CD14-positive monocyte (primary cell): ENCODE measurements at regions of chr9 and their contacts with region 1.

Region 1: DNA sequence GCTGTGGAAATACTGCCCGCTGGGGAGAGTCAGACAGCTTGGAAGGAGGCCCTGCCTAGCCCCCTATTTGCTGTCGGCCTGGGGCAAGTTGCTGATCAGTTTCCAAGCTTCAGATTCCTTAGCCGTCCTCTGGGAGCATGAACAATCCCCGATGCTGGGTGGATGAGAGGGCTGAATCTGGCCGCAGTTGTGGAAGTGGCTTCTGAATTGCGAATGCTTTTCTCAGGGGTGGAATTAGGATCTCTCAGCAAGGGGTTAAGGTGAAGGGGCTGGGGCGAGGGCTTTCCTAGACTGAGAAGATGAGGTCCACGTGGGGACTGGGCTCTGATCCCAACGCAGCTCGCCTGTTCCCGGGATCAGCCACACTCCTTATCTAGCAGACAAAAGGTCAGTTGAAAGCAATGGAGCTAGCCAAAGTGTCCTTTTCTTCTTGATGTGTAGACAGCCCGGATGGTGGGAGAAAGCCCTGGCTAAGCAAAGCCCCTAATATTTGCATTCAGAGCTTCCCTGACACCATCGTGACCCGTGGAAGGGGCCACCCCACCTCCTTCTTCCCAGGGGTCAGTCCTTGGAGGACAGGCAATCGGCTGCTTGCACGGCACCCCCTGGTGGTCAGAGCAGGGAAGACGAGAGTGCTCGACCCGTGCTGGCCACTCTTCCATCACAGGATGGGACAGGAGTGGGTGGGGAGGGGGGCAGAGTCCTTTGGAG is 54.9 kb downstream of the COL15A1 start:
- DNase-seq: peak; percentile 50 to 70 (median 67)
- H3K4me3 ChIP-seq: no peak overlapping the region
- H3K4me3 Mint-ChIP-seq: no peak overlapping the region
- H3K27ac ChIP-seq: no peak overlapping the region
- H3K27ac Mint-ChIP-seq: peak overlapping the region in 3 of 7 donors; percentile 13 to 48 (median 19)
- H3K4me1 ChIP-seq: peaks cover 17 to 34% of the 10 kb centered on the region in 2 donors
- H3K4me1 Mint-ChIP-seq: peaks cover 25% of the 10 kb centered on the region
- H3K27me3 ChIP-seq: peaks cover 0 to 7% of the 10 kb centered on the region in 2 donors
- H3K27me3 Mint-ChIP-seq: peaks cover 26 to 43% (median 39%) of the 10 kb centered on the region in 3 donors
- CTCF ChIP-seq: peak; percentile 93

Region 2: GRCh38 chr9:98848450-98849149 is 150.0 kb before region 1 on chr9:
- intact Hi-C with region 1: loop called in 1 of 2 experiments (anchors 5 kb)
- DNase-seq: peak; percentile 62 to 78 (median 76)
- H3K4me3 ChIP-seq: no peak overlapping the region
- H3K4me3 Mint-ChIP-seq: no peak overlapping the region
- H3K27ac ChIP-seq: no peak overlapping the region
- H3K27ac Mint-ChIP-seq: no peak overlapping the region
- H3K4me1 ChIP-seq: no peaks in the 10 kb centered on the region
- H3K4me1 Mint-ChIP-seq: peaks cover 11% of the 10 kb centered on the region
- H3K27me3 ChIP-seq: no peaks in the 10 kb centered on the region
- H3K27me3 Mint-ChIP-seq: peaks cover 4 to 7% (median 5%) of the 10 kb centered on the region in 3 donors
- CTCF ChIP-seq: peak; percentile 96

Region 3: DNA sequence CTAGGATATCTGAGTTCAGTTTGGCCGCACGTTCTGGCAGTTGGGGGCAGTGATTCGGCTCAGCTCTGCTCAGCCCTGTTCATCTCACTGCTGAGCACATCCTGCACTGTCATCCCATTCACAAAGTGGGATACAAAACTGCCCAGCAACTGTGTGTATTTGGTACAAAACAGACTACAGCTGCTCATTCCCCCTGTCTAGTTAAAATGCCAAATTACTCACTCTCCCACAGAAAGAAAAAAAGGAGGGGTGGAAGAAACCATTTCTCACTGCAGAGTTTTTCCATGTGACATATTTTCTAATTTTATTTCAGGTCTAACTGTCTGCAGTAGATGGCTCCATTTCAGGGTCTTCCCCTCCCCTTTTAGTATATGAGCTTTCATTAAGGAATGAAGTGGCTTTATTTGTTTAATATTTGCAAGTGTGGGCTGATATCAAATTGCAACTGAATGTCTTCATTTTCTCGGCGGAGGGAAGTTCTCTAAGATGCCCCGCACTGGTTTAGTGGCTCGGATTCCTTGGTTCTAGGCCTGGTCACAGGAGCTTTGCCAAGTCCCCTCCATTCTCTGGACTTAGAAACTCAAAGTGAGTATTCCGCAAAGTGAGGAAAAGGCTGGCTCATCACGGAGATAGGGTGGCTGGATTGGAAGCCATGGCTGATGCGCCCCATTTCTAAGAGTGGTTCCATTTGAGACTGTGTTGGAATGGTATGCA is 40.2 kb before region 1 on chr9:
- intact Hi-C with region 1: no loop called
- DNase-seq: no peak
- H3K4me3 ChIP-seq: no peak overlapping the region
- H3K4me3 Mint-ChIP-seq: no peak overlapping the region
- H3K27ac ChIP-seq: no peak overlapping the region
- H3K27ac Mint-ChIP-seq: no peak overlapping the region
- H3K4me1 ChIP-seq: no peaks in the 10 kb centered on the region
- H3K4me1 Mint-ChIP-seq: no peaks in the 10 kb centered on the region
- H3K27me3 ChIP-seq: no peaks in the 10 kb centered on the region
- H3K27me3 Mint-ChIP-seq: peaks cover 0 to 8% (median 3%) of the 10 kb centered on the region in 3 donors
- CTCF ChIP-seq: no peak

Region 4: GRCh38 chr9:98974994-98975712 is 23.4 kb before region 1 on chr9:
- intact Hi-C with region 1: loop called in 1 of 2 experiments (anchors 2 kb)
- DNase-seq: peak; percentile 53 to 63 (median 60)
- H3K4me3 ChIP-seq: no peak overlapping the region
- H3K4me3 Mint-ChIP-seq: peak overlapping the region in 1 of 2 donors; percentile 80
- H3K27ac ChIP-seq: no peak overlapping the region
- H3K27ac Mint-ChIP-seq: peak overlapping the region in 2 of 7 donors; percentile 12 to 35
- H3K4me1 ChIP-seq: peaks cover 4 to 6% of the 10 kb centered on the region in 2 donors
- H3K4me1 Mint-ChIP-seq: peaks cover 9% of the 10 kb centered on the region
- H3K27me3 ChIP-seq: peaks cover 5 to 16% of the 10 kb centered on the region in 2 donors
- H3K27me3 Mint-ChIP-seq: peaks cover 17 to 43% (median 30%) of the 10 kb centered on the region in 3 donors
- CTCF ChIP-seq: peak; percentile 98

Region 5: GRCh38 chr9:99042620-99043019 is 44.0 kb after region 1 on chr9:
- intact Hi-C with region 1: no loop called
- DNase-seq: no peak
- H3K4me3 ChIP-seq: no peak overlapping the region
- H3K4me3 Mint-ChIP-seq: no peak overlapping the region
- H3K27ac ChIP-seq: no peak overlapping the region
- H3K27ac Mint-ChIP-seq: peak overlapping the region in 1 of 7 donors; percentile 30
- H3K4me1 ChIP-seq: peaks cover 34 to 38% of the 10 kb centered on the region in 2 donors
- H3K4me1 Mint-ChIP-seq: peaks cover 37% of the 10 kb centered on the region
- H3K27me3 ChIP-seq: peaks cover 47 to 58% of the 10 kb centered on the region in 2 donors
- H3K27me3 Mint-ChIP-seq: peaks cover 62 to 64% (median 63%) of the 10 kb centered on the region in 3 donors
- CTCF ChIP-seq: no peak

Region 6: DNA sequence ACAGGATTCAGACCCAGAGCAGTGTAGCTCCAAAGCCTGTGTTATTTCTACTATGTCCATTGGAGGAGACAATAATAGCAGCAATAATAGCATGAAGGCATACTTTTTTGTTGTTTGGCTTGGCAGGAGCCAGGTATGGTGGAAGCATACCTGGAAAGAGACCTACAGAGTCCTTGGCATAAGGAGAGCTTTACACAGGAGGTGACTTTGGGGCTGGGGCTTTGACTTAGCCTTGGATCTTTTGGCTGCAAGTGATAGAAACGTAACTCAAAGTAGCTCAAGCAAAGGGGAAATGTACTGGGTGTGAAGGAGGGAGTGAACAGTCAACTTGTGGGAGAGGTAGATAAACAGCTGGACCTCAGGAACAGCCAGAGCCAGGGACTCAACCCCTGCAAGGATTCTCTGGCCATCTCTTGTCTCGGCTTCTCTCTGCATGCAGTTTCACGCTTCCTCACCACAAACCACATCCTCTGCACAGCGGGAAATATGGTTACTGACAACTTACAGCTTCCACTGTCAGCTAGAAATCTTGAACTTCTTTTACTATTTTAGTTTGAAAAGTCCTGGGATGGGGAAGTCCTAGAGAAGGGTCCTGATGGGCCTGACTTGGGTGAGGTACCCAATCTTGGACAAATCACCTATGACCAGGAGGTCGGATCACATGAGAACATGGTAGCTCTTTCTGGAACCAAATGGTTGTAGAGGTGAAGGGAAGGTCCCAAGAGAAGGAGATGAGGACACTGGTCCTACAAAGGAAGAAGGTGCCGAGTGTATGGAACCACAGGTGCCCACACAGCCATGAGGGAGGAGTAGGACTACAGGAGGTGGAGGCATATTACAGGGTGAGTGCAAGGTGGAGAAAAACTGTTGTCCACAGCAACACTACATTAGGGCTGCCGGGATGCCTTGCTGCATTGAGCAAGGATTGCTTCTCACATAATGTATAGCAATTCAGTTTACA is 59.3 kb after region 1 on chr9:
- intact Hi-C with region 1: loop called in 1 of 2 experiments (anchors 10 kb)
- DNase-seq: peak; percentile 63 to 84 (median 73)
- H3K4me3 ChIP-seq: peak overlapping the region in 1 of 3 experiments; percentile 60
- H3K4me3 Mint-ChIP-seq: peak overlapping the region; percentile 59 to 81
- H3K27ac ChIP-seq: peak overlapping the region; percentile 56 to 88
- H3K27ac Mint-ChIP-seq: peak overlapping the region; percentile 96 to 99 (median 98)
- H3K4me1 ChIP-seq: peaks cover 60 to 61% of the 10 kb centered on the region in 2 donors
- H3K4me1 Mint-ChIP-seq: peaks cover 59% of the 10 kb centered on the region
- H3K27me3 ChIP-seq: peaks cover 25 to 30% of the 10 kb centered on the region in 2 donors
- H3K27me3 Mint-ChIP-seq: peaks cover 29 to 39% (median 34%) of the 10 kb centered on the region in 3 donors
- CTCF ChIP-seq: no peak

Region 7: DNA sequence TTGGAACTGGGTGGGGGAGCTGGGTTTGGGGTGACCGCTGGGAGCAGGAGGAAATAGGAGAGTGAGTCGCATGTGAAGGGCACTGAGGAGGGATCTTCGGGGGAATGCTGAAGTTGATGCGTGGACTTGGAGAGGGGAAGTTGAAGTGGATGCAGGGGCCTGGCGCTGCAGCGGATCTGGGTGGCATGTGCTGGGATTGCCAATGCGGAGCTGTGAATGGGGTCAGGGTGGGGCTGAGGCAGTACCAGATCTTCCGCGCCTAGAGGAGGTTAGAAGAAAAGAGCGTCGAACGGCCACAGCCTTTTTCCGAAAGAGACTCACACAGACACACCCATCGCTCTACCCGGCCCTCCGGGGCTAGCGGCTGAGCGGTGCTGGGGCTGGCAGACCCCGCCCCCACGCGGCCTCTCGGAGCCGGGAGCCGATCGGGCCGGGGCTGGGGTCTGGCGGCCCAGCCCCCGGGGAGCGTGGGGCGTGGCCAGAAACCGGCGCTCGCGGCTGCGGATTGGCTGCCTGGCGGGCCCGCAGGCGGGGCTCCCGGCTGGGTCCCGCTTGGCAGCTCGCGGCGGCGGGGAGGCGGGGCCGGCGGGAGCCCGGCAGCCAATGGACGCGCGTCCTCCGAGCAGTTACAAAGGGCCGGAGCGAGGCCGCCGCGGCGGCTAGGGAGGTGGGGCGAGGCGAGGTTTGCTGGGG is 106.0 kb after region 1 on chr9 and contains the start of gene TGFBR1:
- intact Hi-C with region 1: loop called in 1 of 2 experiments (anchors 10 kb)
- DNase-seq: peak; percentile 82 to 88 (median 83)
- H3K4me3 ChIP-seq: peak within 1 kb of the TSS; percentile 74 to 96 (median 85)
- H3K4me3 Mint-ChIP-seq: peak within 1 kb of the TSS; percentile 96 to 99
- H3K27ac ChIP-seq: peak within 1 kb of the TSS; percentile 68 to 94
- H3K27ac Mint-ChIP-seq: peak within 1 kb of the TSS; percentile 87 to 98 (median 95)
- H3K4me1 ChIP-seq: peaks cover 47 to 52% of the 10 kb centered on the region in 2 donors
- H3K4me1 Mint-ChIP-seq: peaks cover 50% of the 10 kb centered on the region
- H3K27me3 ChIP-seq: no peaks in the 10 kb centered on the region
- H3K27me3 Mint-ChIP-seq: peaks cover 0 to 5% (median 0%) of the 10 kb centered on the region in 3 donors
- CTCF ChIP-seq: no peak
- polyA plus RNA-seq, gene TGFBR1: 10.7 to 26.8 (median 25.0) TPM

Region 8: DNA sequence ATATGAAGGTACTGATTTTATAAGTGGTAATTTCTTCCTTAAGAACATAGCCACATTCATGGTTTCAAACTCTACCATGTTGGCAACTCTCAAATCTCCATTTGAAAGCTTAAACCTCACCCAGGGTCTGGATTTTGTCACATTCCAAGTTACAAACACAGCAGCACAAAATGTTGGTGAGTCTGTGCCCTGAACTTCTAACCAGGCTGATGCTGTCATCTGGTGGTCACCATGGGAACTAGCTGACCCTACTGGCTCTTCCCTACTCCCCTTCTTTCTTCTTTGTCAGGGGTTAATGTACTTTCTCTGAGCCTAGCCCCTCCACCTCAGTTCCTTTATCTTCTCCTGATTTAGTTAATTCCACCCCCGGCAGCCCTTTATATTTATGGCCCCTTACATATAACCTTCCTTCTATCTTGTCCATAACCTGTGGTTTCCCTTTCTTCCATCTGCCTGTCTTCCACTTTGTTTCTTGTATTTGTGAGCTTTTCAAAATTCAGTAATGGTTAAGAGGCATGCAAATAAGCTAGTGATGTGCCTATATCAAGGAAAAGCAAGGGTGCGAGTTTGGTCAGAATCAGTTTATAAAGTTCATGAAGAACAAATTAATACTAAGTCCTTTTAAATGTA is 142.2 kb after region 1 on chr9:
- intact Hi-C with region 1: loop called (anchors 2 kb)
- DNase-seq: peak; percentile 52 to 66 (median 64)
- H3K4me3 ChIP-seq: no peak overlapping the region
- H3K4me3 Mint-ChIP-seq: no peak overlapping the region
- H3K27ac ChIP-seq: no peak overlapping the region
- H3K27ac Mint-ChIP-seq: peak overlapping the region in 4 of 7 donors; percentile 0 to 44 (median 30)
- H3K4me1 ChIP-seq: peaks cover 22 to 26% of the 10 kb centered on the region in 2 donors
- H3K4me1 Mint-ChIP-seq: peaks cover 34% of the 10 kb centered on the region
- H3K27me3 ChIP-seq: no peaks in the 10 kb centered on the region
- H3K27me3 Mint-ChIP-seq: peaks cover 0 to 2% (median under 1%) of the 10 kb centered on the region in 3 donors
- CTCF ChIP-seq: peak; percentile 95